PC-9 (cell line): ENCODE measurements at regions of chr19 and their contacts with region 1.

Region 1: DNA sequence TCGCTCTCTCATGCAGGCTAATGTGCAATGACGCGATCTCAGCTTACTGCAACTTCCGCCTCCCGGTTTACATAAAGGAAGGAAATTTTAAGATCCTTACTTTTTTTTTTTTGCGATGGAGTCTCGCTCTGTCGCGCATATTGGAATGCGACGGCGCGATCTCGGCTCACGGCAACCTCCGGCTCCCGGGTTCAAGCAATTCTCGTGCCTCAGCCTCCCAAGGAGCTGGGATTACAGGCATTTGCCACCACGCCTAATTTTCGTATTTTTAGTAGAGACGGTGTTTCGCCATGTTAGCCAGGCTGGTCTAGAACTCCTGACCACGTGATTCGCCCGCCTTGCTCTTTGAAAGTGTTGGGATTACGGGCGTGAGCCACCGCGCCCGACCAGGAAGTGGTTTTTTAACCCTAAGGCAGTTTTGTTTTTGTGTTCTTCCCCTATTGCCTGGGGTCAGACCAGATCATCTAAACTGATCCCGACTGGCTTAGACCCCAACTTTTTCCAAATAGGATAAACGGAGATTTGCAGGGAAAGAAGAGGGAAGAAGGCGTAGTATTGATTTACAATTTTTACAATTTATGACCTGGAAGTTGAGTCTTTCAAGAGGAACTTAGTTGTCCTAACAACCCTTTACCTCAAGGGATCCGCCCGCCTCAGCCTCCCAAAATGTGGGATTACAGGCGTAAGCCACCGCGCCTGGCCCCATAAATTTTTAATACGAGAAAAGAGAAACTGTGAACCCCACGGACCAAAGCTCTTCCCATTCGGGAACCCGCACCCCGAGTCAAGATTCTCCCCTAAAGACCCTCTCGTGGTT is 142.0 kb downstream of the ZNF737 start:
- DNase-seq: peak in 1 of 2 experiments; percentile 8
- H3K4me3 ChIP-seq: peak overlapping the region; percentile 65
- H3K27ac ChIP-seq: peak overlapping the region; percentile 40
- H3K4me1 ChIP-seq: no peaks in the 10 kb centered on the region
- H3K27me3 ChIP-seq: no peaks in the 10 kb centered on the region
- CTCF ChIP-seq: no peak

Region 2: DNA sequence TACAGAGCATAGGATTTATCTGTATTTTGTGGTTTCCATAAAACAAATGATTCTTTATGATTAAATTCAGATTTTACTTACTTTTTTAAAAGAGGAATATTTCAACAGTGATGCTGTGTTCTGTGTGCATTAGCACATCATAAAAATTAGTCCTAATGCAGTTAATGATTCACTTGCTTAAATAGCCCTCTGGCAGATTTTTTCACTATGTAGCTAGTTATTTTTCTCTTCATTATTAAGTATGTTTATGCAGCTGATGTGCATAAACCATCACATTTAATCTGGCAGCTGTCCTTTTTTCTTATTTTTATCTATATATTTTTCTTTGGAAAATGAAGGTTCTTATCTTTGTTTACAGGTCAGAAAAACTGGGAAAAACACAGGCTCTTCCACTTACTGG is 129.4 kb before region 1 on chr19:
- CTCF ChIA-PET with region 1: no interaction called
- POLR2A ChIA-PET with region 1: no interaction called
- intact Hi-C with region 1: no loop called
- DNase-seq: no peak
- H3K4me3 ChIP-seq: no peak overlapping the region
- H3K27ac ChIP-seq: no peak overlapping the region
- H3K4me1 ChIP-seq: no peaks in the 10 kb centered on the region
- H3K27me3 ChIP-seq: no peaks in the 10 kb centered on the region
- CTCF ChIP-seq: no peak

Region 3: DNA sequence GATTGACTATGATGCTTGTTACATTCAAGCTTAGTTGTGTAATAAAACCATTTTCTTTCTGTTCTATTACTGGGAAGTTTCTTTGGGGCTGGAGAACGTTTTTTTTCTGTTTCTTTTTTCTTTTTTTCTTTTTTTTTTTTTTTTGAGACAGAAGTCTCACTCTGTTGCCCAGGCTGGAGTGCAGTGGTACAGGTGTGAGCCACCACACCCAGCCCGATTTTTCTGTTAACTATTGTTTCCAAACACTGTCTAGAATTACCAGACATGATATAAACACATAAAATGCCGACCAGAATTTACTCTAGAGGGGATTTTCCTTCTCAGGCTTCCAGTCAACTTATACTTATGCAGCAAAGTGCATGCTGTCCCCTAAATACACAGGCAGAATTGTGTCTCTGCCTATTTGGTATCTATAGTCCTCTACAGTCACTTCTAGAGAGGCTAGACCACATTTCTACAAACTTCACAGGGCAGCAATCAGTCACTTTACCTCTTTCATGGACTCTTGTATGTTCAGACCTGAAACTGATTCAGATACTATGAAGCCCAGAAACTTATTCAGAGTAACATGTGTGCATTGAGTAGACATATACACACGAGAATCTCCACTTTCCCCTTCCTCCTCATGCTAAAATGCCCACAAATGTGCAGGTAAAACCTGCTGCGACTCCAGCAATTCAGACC is 20.8 kb after region 1 on chr19:
- CTCF ChIA-PET with region 1: no interaction called
- POLR2A ChIA-PET with region 1: interaction called, 10 read pairs
- intact Hi-C with region 1: no loop called
- DNase-seq: no peak
- H3K4me3 ChIP-seq: no peak overlapping the region
- H3K27ac ChIP-seq: no peak overlapping the region
- H3K4me1 ChIP-seq: no peaks in the 10 kb centered on the region
- H3K27me3 ChIP-seq: no peaks in the 10 kb centered on the region
- CTCF ChIP-seq: no peak